Posterior cingulate gyrus (tissue), 11 donors: ENCODE measurements at regions of chr10 and their contacts with region 1.

Region 1: DNA sequence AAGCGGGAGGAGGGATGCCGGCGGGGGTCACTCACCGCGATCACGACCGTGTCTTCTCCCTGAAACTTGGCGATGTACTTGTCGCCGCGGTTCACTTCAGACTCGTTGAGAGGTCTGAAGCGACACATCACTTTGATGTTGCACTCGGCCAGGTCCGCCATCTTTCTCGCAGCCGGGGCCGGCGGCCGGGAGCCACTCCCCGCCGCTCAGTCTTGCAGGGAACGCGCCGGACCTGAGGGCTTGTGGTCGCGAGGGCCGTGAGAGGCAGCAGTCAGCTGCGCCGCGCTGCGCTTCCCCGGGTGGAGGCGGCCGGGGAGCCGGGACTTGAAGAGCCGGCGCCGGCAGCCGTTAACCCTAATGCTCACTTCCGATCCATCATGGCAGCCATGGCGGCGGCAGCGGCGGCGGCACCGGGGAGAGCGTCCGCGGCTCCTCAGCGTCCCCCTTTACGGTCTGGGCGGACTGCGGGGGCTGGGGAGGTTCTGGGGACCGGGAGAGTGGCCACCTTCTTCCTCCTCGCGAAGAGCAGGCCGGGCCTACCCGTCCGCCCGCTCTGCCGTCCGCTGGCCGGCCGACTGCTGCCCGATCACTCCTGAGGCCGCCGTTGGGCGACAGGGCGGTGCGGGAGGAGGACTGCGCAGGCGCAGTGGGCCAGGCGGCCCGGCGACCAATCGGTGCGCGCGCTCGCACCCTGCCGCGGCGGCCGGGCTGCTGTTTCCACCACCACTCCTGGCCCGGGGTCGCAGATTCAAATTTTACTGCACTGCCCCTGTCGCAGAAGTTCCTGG is at the start of gene KIF5B:
- DNase-seq: peak; percentile 79 to 98 (median 86)

Region 2: DNA sequence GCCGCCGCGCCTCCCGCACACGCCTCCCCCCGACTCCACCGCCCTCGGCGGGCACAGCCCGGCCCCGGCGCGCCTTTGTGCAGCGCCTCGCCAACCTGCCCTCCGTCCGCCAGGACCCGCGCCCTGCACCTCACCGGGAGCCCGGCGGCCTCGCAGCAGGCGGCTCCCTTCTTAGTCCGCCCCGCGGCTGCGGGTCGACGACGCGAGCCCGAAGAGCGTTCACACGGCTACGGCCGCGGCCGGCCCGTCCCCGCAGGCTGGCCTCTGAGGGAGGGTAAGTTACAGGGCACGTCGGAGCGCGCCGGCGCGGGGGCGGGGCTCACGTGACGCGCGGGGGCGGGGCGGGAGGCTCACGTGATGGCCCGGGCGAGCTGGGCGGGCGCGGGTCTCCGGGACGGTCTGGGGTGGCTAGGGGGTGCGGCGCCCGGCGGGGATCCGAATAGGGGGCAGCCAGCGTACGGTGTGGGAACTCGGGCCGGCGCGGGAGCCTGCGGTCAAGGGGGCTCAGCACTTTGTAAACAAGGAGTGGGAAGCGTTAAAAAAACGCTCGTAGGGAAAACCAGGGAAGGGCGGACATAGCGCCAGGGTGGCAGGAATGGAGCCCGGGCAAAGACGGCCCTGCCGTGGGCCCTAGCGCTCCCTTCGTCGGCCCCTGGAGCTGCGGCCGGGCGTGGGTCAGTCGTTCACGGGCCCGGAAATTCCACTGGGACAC is 127.3 kb before region 1 on chr10 and contains the start of gene ARHGAP12:
- intact Hi-C with region 1: loop called (anchors 10 kb)
- DNase-seq: peak; percentile 75 to 97 (median 82)

Region 3: GRCh38 chr10:32190890-32191491 is 135.0 kb after region 1 on chr10:
- intact Hi-C with region 1: loop called (anchors 10 kb)
- DNase-seq: no peak

Region 4: DNA sequence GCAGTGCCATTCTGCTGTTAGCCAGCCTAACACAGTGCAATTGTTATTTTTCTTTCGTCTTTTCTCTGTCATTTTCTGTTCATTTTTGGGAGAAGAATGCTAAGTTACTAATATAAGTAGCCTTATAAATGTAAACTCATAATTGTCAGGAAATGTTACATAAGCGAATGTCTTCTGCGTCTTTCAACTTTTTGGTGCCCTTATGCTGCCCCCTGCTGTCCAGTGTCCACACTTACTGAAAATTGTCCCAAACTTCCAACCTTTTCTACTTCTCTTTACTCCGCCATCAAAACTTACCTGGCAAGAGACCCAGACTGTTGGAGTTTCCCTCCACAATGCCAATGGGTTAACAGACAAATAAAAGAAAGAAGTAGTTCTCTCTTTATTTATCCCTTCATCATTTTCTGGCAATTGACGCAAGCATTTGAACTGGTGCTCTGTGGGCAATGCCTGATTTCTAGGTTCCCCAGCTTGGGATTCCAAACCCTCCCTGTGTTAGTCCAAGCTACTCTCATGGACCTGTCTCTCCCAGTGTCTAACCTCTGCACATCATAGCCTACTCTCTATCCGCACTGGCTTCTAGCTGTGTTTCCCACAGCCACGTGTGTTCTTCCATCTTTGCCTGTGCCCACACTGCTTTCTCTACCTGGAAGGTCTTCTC is 311.9 kb after region 1 on chr10:
- intact Hi-C with region 1: loop called (anchors 5 kb)
- DNase-seq: peak in 8 of 10 donors; percentile 32 to 92 (median 71)